Gastrocnemius medialis (tissue), 4 donors: ENCODE measurements at regions of chr12 and their contacts with region 1.

Region 1: DNA sequence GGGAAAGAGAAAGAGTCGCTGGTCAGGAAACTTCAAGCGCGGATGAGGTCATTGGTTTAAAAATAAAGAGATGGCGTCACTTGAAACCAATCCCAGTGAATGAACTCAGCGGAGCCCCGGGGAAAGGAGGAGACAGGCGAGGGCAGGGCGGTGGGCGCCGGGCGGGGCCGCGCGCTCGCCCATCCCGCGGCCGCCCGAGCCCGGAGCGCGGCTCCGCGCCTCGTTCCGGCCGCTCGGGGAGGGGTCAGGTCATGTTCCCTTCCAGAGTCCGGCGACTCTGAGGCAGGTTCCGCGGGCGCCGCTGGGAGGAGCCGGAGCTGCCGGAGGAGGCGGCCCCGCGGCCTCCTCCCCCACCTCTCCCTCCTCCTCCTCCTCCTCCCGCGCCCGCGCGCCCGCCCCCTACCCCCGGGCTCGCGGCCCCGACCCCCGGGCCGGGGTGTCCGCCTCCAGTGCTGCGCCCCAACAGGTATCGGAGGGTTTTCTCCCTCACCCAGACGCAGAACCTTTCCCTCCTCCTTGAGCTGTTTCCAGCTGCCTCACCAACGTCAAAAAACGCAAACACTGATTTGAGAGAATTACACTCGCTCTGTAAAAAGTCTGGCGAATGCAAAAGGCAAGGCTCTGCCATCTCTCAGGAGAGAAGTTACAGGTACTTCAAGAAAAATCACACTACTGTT is at the start of gene DUSP16:
- DNase-seq: peak; percentile 87 to 92
- ATAC-seq: peak; percentile 88 to 89
- H3K4me3 ChIP-seq: peak within 1 kb of the TSS; percentile 64 to 90 (median 76)
- H3K27ac ChIP-seq: peak within 1 kb of the TSS; percentile 89 to 100 (median 98)
- H3K4me1 ChIP-seq: peaks cover 22 to 29% of the 10 kb centered on the region in 2 donors
- H3K27me3 ChIP-seq: no peaks in the 10 kb centered on the region
- CTCF ChIP-seq: peak in 2 of 5 experiments; percentile 19 to 46
- POLR2A ChIP-seq: peak; percentile 86 to 94
- total RNA-seq, gene DUSP16: 10.9 to 15.7 (median 13.3) TPM

Region 2: GRCh38 chr12:11162502-11162901 is 1400.2 kb before region 1 on chr12:
- in situ Hi-C with region 1: no loop called
- intact Hi-C with region 1: no loop called
- DNase-seq: no peak
- ATAC-seq: no peak
- H3K4me3 ChIP-seq: no peak overlapping the region
- H3K27ac ChIP-seq: no peak overlapping the region
- H3K4me1 ChIP-seq: peaks cover 19 to 27% of the 10 kb centered on the region in 2 donors
- H3K27me3 ChIP-seq: no peaks in the 10 kb centered on the region
- CTCF ChIP-seq: no peak
- POLR2A ChIP-seq: no peak

Region 3: GRCh38 chr12:12356886-12357718 is 205.6 kb before region 1 on chr12 and contains the start of gene BORCS5:
- in situ Hi-C with region 1: no loop called
- intact Hi-C with region 1: loop called (anchors 1 kb)
- DNase-seq: peak; percentile 92 to 96
- ATAC-seq: peak; percentile 95 to 96
- H3K4me3 ChIP-seq: peak within 1 kb of the TSS; percentile 79 to 97 (median 94)
- H3K27ac ChIP-seq: peak within 1 kb of the TSS; percentile 96 to 99 (median 98)
- H3K4me1 ChIP-seq: peaks cover 15 to 16% of the 10 kb centered on the region in 2 donors
- H3K27me3 ChIP-seq: no peaks in the 10 kb centered on the region
- CTCF ChIP-seq: peak in 3 of 5 experiments; percentile 8 to 29 (median 25)
- POLR2A ChIP-seq: peak; percentile 96 to 98
- total RNA-seq, gene BORCS5: 13.0 to 13.9 (median 13.4) TPM

Region 4: GRCh38 chr12:12384571-12385340 is 178.0 kb before region 1 on chr12:
- in situ Hi-C with region 1: loop called (anchors 5 to 10 kb)
- intact Hi-C with region 1: no loop called
- DNase-seq: no peak
- ATAC-seq: no peak
- H3K4me3 ChIP-seq: no peak overlapping the region
- H3K27ac ChIP-seq: no peak overlapping the region
- H3K4me1 ChIP-seq: peaks cover 0 to 16% of the 10 kb centered on the region in 2 donors
- H3K27me3 ChIP-seq: no peaks in the 10 kb centered on the region
- CTCF ChIP-seq: no peak
- POLR2A ChIP-seq: no peak

Region 5: DNA sequence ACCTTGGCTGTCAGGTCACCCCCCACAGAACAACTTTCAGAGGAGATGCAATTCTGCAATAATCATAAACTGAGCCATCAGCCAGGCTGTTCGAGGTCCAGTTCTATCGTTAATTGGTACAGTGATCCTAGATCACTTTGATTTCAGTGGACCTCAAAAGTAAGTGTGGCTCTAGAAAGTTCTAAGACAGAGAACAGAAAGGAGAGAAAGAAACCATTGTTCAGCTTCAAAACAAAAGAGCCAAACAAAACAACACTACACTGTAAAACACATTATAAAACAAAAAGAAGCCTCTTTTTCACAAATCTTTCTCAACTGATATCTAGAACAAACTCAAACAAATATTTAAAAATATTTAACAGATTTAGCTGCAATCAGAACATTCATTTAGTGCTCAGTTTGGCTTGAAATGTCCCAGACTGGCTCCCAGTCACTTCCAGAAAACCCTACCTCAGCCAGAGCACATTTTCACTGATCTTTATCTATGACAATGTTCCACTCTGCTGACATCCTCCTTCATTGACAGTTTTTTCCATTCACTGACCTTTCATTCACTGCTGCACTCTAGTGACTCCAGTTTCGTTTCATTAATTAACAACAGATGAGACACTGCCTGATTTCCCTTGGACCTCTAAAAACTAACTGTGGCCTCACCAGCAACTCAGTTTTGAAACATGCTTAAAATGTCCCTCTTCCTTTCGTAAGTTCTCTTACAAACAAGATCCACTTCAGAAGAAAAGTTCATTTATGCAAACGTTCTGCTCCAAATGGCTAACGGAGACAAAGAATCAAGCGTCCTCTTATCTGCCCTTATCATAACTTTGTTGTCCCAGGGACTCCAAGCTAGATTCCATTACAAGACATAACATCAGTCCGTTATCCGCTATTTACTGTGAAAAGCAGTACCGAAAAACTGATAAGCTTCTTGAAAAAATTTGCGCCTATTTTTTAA is 56.9 kb before region 1 on chr12:
- in situ Hi-C with region 1: no loop called
- intact Hi-C with region 1: loop called (anchors 5 kb)
- DNase-seq: no peak
- ATAC-seq: peak; percentile 45 to 65
- H3K4me3 ChIP-seq: peak overlapping the region; percentile 18 to 44 (median 30)
- H3K27ac ChIP-seq: peak overlapping the region; percentile 50 to 77 (median 72)
- H3K4me1 ChIP-seq: peaks cover 48 to 57% of the 10 kb centered on the region in 2 donors
- H3K27me3 ChIP-seq: no peaks in the 10 kb centered on the region
- CTCF ChIP-seq: no peak
- POLR2A ChIP-seq: no peak

Region 6: DNA sequence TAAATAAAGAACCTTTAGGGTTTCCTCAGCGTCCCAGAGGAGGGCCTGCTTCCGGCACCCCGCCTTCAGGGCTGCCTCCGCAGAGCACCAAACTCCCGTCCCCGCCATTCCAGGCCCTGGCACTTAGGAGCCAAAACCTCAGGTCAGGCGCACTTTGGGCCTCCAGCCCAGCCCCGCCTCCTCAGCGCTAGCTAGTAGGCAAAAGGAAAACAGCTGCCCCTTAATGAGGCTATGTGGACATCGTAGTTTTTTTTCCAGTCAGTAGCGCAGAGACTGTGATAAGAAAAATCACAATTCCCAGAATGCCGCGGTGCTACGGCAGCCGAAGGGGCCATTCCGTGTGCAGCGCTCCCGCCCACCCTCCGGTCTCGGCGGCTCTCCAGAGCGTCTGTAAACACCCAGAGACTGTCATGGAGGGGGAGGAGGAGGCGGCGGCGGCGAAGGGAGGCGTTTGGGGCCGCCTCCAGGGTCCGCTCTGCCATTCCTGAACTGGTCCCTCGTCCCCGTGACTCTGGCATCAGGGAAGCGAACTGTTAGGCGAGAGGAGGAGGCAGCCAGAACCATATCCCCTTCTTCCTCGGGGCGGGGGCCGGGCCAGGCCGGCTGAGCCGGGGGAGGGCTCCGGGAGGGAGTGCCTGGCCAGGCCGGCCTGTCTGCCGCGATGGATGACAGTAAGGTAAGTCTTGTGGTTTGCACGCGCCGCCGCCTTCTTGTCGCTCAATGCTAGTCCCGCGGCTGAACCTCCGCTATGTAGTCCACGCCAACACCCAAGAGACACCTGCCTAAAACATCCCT is 49.0 kb after region 1 on chr12 and contains the start of gene CREBL2:
- in situ Hi-C with region 1: no loop called
- intact Hi-C with region 1: loop called (anchors 1 kb)
- DNase-seq: peak; percentile 83 to 97
- ATAC-seq: peak; percentile 97 to 98
- H3K4me3 ChIP-seq: peak within 1 kb of the TSS; percentile 78 to 90 (median 82)
- H3K27ac ChIP-seq: peak within 1 kb of the TSS; percentile 95 to 98 (median 96)
- H3K4me1 ChIP-seq: peaks cover 18 to 24% of the 10 kb centered on the region in 2 donors
- H3K27me3 ChIP-seq: no peaks in the 10 kb centered on the region
- CTCF ChIP-seq: peak in 1 of 5 experiments; percentile 27
- POLR2A ChIP-seq: peak; percentile 61 to 80
- total RNA-seq, gene CREBL2: 6.3 to 13.6 (median 10.3) TPM

Region 7: DNA sequence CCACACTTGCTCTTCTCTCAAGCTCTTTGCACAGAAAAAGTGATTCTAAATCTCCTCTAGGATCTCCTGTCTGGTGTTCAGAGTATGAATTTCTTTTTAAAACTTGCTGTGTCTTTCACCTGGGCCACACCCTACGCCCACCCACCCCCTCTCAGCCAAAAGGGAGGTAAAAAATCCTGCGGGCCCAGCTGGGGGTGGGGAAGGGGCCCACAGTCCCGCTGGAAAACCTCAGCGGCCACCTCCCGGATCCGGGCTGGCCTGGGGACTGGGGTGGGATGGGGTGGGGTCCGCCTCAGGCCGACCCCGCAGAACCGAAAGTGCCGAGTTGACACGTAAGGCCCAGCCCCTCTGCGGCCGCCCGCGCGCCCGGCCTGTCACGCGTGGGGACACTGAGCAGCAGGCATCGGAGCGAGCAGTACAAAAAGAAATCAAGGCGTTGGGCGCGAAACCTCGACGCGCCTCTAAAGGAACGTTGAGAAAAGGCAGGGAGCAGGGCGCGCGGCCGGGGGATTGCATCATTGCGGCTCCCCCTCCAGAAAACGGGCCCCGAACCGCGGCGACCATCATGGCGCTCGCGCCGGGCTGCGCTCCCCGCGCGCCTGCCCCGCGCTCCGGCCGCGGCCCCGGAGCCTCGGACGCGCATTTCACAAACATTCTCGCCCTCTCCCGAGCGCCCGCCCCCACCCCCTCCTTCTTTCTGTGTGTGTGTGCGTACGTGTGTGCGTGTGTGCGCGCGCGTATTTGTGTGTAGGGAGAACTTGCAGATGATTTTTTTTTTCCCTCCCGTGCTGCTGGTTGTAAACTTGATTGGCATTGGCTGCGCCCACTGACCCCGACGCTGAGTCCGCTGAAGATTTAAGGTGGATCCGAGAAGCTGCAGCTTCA is 162.2 kb after region 1 on chr12:
- in situ Hi-C with region 1: no loop called
- intact Hi-C with region 1: loop called (anchors 1 kb)
- DNase-seq: peak; percentile 89 to 95
- ATAC-seq: peak; percentile 90 to 91
- H3K4me3 ChIP-seq: peak overlapping the region; percentile 66 to 88 (median 80)
- H3K27ac ChIP-seq: peak overlapping the region; percentile 96 to 99 (median 98)
- H3K4me1 ChIP-seq: peaks cover 36 to 37% of the 10 kb centered on the region in 2 donors
- H3K27me3 ChIP-seq: no peaks in the 10 kb centered on the region
- CTCF ChIP-seq: peak in 2 of 5 experiments; percentile 9 to 39
- POLR2A ChIP-seq: peak; percentile 85 to 91